ENCODE measurements at regions of chr13 and their contacts with region 1.

Region 1: DNA sequence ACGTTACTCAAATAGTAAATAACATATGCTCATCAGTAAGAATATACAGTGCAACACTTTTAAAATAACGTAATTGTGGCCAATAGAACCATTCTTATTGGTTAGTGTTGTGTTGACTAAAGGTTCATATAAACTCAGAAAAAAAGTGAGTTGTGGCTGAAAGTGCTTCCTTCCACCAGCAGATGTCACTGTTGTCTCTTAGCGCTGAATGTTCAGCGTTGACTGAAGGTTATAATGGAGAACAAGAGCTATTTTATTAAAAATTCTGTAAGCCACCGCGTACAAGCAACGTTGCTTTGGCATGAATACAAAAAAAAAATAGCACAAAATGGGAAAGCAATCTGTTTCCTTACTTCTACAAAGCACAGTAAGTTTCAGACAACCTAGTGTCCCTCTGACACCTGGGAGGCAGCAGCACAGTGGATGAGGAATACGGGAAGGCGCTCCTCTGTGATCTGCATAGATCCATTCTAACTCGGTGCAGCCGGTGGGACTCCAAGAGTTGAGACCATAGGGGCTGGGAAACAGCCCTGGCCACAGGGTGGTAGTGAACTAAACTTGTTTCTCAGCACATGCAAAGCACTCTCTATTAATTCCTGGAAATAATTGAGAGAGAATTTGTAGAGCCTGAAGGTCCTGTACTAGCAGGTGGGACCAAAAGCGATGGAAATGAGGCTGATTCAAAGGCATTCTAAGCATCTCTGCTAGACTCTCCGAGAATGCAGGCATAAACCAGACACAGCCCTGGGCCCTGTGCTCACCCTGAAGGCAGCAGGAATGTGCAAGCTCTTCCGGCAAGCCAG is 24.0 kb upstream of the OXGR1 start:
- DNase-seq: peak in 2 of 5 donors; percentile 20 to 27
- ATAC-seq: peak; percentile 51 to 71 (median 59)
- H3K4me3 ChIP-seq: no peak overlapping the region
- H3K27ac ChIP-seq: no peak overlapping the region
- H3K4me1 ChIP-seq: peaks cover 0 to 5% (median 0%) of the 10 kb centered on the region in 12 donors
- H3K27me3 ChIP-seq: peaks cover 0 to 13% (median 0%) of the 10 kb centered on the region in 9 donors
- CTCF ChIP-seq: peak; percentile 83 to 93 (median 88)
- POLR2A ChIP-seq: no peak

Region 2: DNA sequence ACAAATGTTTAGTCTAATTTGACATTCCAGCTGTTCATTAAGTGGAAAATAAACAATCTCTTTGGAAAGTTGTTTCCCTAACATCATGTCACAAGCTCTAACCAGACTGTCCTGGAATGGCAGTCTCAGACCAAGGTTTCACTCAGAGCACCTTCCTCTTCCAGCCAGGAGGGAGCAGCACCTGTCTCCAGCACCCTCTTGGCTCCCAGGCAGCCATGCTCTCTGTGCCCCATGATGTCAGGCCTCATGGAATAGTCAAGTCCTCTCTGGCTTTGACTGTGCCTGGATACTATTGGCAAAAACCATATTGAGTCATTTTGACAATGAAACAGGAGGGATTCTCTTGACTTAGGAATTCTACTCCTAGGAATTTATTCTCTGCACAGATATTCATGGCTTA is 195.3 kb before region 1 on chr13:
- intact Hi-C with region 1: no loop called
- DNase-seq: no peak
- ATAC-seq: no peak
- H3K4me3 ChIP-seq: no peak overlapping the region
- H3K27ac ChIP-seq: no peak overlapping the region
- H3K4me1 ChIP-seq: no peaks in the 10 kb centered on the region
- H3K27me3 ChIP-seq: no peaks in the 10 kb centered on the region
- CTCF ChIP-seq: peak in 3 of 12 donors; percentile 13 to 14 (median 13)
- POLR2A ChIP-seq: no peak

Region 3: GRCh38 chr13:96835546-96835945 is 182.7 kb before region 1 on chr13:
- intact Hi-C with region 1: no loop called
- DNase-seq: no peak
- ATAC-seq: no peak
- H3K4me3 ChIP-seq: no peak overlapping the region
- H3K27ac ChIP-seq: no peak overlapping the region
- H3K4me1 ChIP-seq: no peaks in the 10 kb centered on the region
- H3K27me3 ChIP-seq: no peaks in the 10 kb centered on the region
- CTCF ChIP-seq: no peak
- POLR2A ChIP-seq: no peak

Region 4: DNA sequence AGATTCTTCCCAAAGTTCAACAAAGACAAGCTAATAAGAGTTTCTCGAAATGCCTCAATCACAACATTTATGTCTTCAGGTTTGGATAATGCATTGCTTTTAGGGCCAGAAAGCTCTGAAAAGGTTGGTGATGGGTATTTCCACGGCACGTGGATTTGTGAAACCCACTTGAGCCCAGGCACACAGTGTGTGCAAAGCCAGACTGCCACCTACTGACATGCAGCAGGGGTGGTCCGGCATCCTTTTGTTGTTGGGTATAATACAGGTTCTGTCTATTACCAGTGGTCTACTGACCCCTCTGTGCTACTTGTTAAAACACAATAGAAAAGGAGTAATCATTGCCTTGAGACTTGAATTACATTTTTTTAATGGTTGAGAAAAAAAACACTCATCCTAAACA is 641.4 kb after region 1 on chr13:
- intact Hi-C with region 1: loop called in 1 of 10 experiments (anchors 10 kb)
- DNase-seq: peak in 1 of 5 donors; percentile 11
- ATAC-seq: peak in 3 of 4 donors; percentile 50 to 62 (median 52)
- H3K4me3 ChIP-seq: no peak overlapping the region
- H3K27ac ChIP-seq: no peak overlapping the region
- H3K4me1 ChIP-seq: peaks cover 0 to 13% (median 0%) of the 10 kb centered on the region in 12 donors
- H3K27me3 ChIP-seq: no peaks in the 10 kb centered on the region
- CTCF ChIP-seq: peak; percentile 20 to 60 (median 44)
- POLR2A ChIP-seq: no peak

Region 5: DNA sequence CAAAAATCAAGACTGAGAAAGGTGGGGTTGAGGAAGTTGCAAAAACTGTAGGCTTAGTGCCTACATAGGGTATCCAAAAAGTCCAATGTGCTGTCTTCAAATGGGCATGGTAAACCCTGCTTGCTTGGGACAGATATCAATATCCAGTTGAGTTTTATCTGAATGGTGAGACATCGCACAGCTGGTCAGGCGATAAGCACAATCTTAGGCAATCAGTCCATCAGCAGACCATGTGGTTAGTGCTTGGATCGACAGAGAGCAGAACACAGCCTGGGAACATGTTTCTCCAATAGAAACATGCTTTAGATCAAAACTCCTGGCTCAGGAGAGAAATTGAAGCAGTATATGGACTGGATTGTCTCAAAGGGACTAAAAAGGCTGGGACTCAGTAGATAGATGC is 784.0 kb after region 1 on chr13:
- intact Hi-C with region 1: loop called in 5 of 10 experiments (anchors 5 to 10 kb)
- DNase-seq: no peak
- ATAC-seq: no peak
- H3K4me3 ChIP-seq: no peak overlapping the region
- H3K27ac ChIP-seq: no peak overlapping the region
- H3K4me1 ChIP-seq: no peaks in the 10 kb centered on the region
- H3K27me3 ChIP-seq: no peaks in the 10 kb centered on the region
- CTCF ChIP-seq: no peak
- POLR2A ChIP-seq: no peak

Region 6: GRCh38 chr13:97810152-97810551 is 791.9 kb after region 1 on chr13:
- intact Hi-C with region 1: loop called in 5 of 10 experiments (anchors 10 kb)
- DNase-seq: no peak
- ATAC-seq: no peak
- H3K4me3 ChIP-seq: no peak overlapping the region
- H3K27ac ChIP-seq: no peak overlapping the region
- H3K4me1 ChIP-seq: no peaks in the 10 kb centered on the region
- H3K27me3 ChIP-seq: no peaks in the 10 kb centered on the region
- CTCF ChIP-seq: peak in 10 of 12 donors; percentile 15 to 54 (median 34)
- POLR2A ChIP-seq: no peak

Region 7: DNA sequence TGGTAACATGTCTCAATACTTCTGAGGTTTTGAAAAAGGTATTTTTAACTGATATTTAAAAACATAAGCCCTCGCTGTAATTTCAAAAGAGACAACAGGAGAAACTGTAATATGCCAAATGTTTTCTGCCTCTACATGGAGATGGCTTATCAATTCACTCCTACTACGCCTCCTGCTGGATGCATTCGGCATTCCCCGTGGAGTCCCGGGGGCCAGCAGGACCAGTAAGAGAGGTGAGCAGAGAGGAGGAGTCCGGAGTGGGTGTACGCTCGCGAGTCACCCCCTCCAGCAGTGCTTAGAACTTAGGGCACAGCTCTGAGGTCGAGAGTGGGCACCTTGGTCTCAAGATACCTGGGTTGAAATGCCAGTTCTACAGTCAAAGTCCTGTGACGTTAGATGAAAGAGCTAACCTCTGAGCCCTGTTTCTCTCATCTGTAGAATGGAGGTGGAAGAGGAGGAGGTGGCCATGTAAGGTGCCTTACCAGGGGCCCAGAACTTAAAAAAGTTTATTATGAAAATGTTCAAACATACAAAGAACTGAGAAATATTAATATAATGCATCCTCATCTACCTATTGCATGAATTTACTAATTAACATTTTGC is 1448.5 kb after region 1 on chr13:
- intact Hi-C with region 1: no loop called
- DNase-seq: no peak
- ATAC-seq: peak in 1 of 4 donors; percentile 15
- H3K4me3 ChIP-seq: no peak overlapping the region
- H3K27ac ChIP-seq: peak overlapping the region in 8 of 12 donors; percentile 2 to 66 (median 46)
- H3K4me1 ChIP-seq: peaks cover 3 to 56% (median 29%) of the 10 kb centered on the region in 12 donors
- H3K27me3 ChIP-seq: no peaks in the 10 kb centered on the region
- CTCF ChIP-seq: peak; percentile 29 to 68 (median 57)
- POLR2A ChIP-seq: no peak